OCI-LY7 (cell line): ENCODE measurements at regions of chr17 and their contacts with region 1.

Region 1: GRCh38 chr17:75295201-75296158 is 6.2 kb upstream of the SLC25A19 start:
- DNase-seq: peak; percentile 94
- H3K4me3 ChIP-seq: peak overlapping the region; percentile 62
- H3K27ac ChIP-seq: peak overlapping the region; percentile 95
- H3K4me1 ChIP-seq: peaks cover 90% of the 10 kb centered on the region
- CTCF ChIP-seq: no peak

Region 2: GRCh38 chr17:75313941-75314551 is 18.6 kb after region 1 on chr17:
- CTCF ChIA-PET with region 1: interaction called, 4 read pairs
- POLR2A ChIA-PET with region 1: interaction called, 108 read pairs
- intact Hi-C with region 1: no loop called
- DNase-seq: no peak
- H3K4me3 ChIP-seq: no peak overlapping the region
- H3K27ac ChIP-seq: peak overlapping the region; percentile 25
- H3K4me1 ChIP-seq: peaks cover 84% of the 10 kb centered on the region
- CTCF ChIP-seq: no peak

Region 3: DNA sequence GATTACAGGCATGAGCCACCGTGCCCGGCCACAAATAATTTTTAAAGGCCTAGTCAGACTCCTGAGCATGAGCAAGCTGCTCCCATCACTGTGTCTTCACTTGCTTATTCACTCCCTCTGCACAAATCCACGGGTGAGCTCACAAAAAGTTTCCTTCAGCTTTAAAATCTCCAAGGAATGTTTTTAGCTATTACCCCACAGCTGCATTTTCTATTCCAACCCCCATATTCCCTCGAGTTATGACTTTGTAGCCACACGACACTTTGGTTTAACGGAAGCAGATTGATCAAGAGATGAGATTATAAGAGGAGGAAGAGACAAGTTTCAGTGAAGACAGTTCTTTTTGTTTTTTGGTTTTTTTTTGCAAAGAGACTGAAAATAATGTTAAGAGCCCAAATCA is 42.9 kb after region 1 on chr17:
- CTCF ChIA-PET with region 1: no interaction called
- POLR2A ChIA-PET with region 1: interaction called, 100 read pairs
- intact Hi-C with region 1: no loop called
- DNase-seq: no peak
- H3K4me3 ChIP-seq: peak overlapping the region; percentile 36
- H3K27ac ChIP-seq: peak overlapping the region; percentile 94
- H3K4me1 ChIP-seq: peaks cover 89% of the 10 kb centered on the region
- CTCF ChIP-seq: no peak

Region 4: DNA sequence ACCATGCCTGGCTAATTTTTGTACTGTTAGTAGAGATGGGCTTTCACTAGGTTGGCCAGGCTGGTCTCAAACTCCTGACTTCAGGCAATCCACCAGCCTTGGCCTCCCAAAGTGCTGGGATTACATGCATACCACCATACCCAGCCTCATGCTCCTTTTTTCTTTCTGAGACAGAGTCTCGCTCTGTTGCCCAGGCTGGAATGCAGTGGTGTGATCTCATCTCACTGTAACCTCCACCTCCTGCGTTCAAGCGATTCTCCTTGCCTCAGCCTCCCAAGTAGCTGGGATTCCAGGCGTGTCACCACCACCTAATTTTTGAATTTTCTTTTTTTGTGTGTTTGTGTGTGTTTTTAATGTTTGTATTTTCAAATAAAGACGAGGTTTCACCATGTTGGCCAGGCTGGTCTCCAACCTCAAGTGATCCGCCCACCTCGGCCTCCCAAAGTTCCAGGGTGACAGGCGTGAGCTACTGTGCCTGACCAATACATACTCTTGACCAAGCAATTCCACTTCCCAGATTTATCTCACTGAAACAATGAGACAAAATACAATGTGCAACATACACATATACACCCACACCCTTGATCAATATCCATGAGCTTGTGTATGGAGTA is 105.0 kb after region 1 on chr17:
- CTCF ChIA-PET with region 1: interaction called, 6 read pairs
- POLR2A ChIA-PET with region 1: interaction called, 91 read pairs
- intact Hi-C with region 1: loop called (anchors 1 kb)
- DNase-seq: no peak
- H3K4me3 ChIP-seq: no peak overlapping the region
- H3K27ac ChIP-seq: no peak overlapping the region
- H3K4me1 ChIP-seq: peaks cover 48% of the 10 kb centered on the region
- CTCF ChIP-seq: no peak

Region 5: DNA sequence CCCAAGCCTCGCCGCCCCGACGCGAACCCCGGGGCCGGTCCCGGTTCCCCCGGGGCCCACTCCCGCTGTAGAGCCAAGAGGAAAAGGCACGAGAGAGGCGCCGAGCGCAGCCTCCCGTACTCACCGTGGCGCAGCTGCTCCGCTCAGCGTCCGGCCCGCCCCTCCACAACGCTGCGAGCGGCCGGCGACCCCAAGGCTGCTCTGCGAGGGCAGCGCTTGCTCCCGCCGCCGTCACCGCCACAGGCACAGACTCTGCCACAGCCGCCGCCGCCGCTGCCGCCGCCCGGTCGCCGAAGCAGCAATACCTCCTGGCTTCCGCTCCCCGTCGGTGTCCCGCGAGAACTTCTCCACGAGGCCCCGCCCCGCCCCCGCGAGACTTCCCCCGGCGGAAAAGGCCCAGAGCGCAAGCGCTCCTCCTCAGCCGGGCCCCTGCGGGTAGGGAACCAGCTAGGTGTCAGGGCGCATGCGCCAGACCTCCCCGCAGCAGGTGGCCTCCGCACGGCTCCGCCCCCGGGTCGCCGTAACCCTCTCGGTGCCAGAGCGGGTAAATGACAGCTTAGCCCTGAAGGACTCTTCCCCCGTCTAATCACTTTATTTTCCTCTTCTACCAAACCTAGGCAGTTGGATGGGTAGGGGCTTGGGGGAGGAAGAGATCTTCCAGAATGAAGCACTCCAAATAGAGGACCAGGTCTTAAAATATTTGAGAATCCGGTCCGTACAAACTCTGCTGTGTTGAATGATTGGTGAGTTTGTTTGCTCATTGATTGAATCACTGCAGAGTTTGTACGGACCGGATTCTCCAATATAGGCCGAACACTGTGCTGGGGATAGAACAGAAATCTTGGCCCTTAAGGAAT is 110.1 kb after region 1 on chr17 and contains the start of gene GRB2:
- CTCF ChIA-PET with region 1: interaction called, 6 read pairs
- POLR2A ChIA-PET with region 1: interaction called, 91 read pairs
- intact Hi-C with region 1: loop called (anchors 1 kb)
- DNase-seq: peak; percentile 100
- H3K4me3 ChIP-seq: peak within 1 kb of the TSS; percentile 84
- H3K27ac ChIP-seq: peak within 1 kb of the TSS; percentile 81
- H3K4me1 ChIP-seq: peaks cover 62% of the 10 kb centered on the region
- CTCF ChIP-seq: no peak
- total RNA-seq, gene GRB2: 240 and 244 TPM in 2 replicates